B cell (primary cell): ENCODE measurements at regions of chr2 and their contacts with region 1.

Region 1: DNA sequence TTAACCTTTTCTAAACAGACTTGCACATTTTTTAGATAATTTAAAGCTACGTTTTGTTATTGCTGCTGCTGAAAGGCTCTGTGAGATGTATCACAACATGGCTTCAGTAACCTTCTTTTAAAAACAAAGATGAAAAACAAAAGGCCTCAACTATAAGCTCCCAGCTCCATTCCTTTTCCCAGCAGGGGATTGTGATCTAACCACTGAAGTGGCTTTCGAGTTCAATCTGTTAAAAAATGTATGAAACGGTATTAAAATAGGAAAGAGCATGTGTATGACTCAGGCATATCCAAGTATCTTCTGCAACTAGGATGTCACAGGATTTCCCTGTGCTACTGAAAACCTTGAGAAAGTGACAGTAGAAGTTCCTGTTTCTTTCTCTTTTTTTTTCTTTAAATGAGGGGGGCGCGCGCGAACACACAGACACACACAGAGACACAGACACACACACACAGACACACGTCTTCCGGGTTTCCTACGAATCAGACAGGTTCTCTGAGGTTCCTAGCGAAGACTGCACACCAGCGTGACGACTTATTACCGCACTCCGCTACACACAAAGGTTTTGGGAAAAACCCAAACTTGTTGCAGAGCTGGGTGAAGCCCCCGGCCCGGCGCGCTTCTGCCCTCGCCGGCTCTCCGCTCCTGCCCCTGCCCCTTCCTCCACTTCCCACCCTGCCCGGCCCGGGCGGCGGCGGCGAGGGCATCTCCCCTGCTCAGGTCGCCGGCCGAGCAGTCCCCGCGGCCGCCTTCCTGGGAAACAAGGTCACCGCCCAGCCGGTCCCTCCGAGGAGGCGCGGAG is 86.8 kb downstream of the RBMS1 start:
- DNase-seq: peak; percentile 91
- ATAC-seq: peak; percentile 71
- H3K4me3 ChIP-seq: peak overlapping the region; percentile 53 to 95 (median 84)
- H3K4me3 Mint-ChIP-seq: peak overlapping the region; percentile 90
- H3K27ac ChIP-seq: peak overlapping the region; percentile 63 to 96
- H3K27ac Mint-ChIP-seq: peak overlapping the region; percentile 96
- H3K4me1 ChIP-seq: peaks cover 55 to 56% of the 10 kb centered on the region in 2 donors
- H3K4me1 Mint-ChIP-seq: peaks cover 79% of the 10 kb centered on the region
- H3K27me3 ChIP-seq: no peaks in the 10 kb centered on the region
- H3K27me3 Mint-ChIP-seq: no peaks in the 10 kb centered on the region
- CTCF ChIP-seq: no peak

Region 2: GRCh38 chr2:159286709-159287441 is 1119.9 kb before region 1 on chr2:
- CTCF ChIA-PET with region 1: no interaction called
- POLR2A ChIA-PET with region 1: no interaction called
- intact Hi-C with region 1: loop called (anchors 10 kb)
- DNase-seq: peak; percentile 98
- ATAC-seq: peak; percentile 99
- H3K4me3 ChIP-seq: peak overlapping the region; percentile 65 to 93 (median 85)
- H3K4me3 Mint-ChIP-seq: peak overlapping the region; percentile 95
- H3K27ac ChIP-seq: peak overlapping the region; percentile 78 to 87
- H3K27ac Mint-ChIP-seq: peak overlapping the region; percentile 90
- H3K4me1 ChIP-seq: peaks cover 20 to 26% of the 10 kb centered on the region in 2 donors
- H3K4me1 Mint-ChIP-seq: peaks cover 32% of the 10 kb centered on the region
- H3K27me3 ChIP-seq: no peaks in the 10 kb centered on the region
- H3K27me3 Mint-ChIP-seq: peaks cover 4% of the 10 kb centered on the region
- CTCF ChIP-seq: no peak

Region 3: DNA sequence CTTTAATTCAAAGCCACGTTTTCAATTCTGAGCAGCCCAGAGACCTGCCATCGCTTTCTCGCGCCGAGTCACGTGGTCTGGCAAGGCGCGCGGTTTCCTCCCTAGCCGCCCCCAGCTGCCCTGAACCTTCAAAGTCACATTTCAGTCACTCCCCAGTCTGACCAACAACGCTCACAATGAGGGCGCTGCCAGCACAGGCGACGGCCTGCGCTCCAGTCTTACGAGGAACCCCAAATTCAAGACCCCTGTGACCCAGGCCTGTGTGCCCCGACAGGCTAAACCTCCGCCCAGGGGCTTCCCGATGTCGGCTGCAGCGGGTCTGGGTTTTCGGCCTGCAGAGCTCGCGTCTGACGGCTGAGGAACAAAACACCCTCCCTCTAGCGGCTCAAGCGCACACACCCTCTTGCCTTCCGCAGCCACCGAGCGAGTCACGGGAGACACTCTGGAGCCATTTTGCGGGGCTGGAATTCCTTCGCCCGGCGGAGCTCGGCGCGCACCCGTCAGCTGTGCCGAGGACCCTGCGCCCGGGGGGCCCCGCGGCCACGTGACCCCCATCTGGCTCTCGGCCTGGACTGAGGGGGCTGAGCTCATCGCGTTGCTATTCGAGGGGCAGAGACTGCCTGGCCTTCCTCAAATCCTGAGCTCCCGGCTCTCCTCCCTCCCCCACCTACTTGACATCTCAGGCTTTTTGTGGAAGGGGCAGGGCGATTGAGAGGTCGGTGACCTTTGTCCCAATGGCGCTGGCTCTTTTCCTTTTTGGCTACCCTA is 136.8 kb before region 1 on chr2:
- CTCF ChIA-PET with region 1: no interaction called
- POLR2A ChIA-PET with region 1: no interaction called
- intact Hi-C with region 1: loop called (anchors 5 kb)
- DNase-seq: peak; percentile 85
- ATAC-seq: peak; percentile 95
- H3K4me3 ChIP-seq: peak overlapping the region in 4 of 5 experiments; percentile 44 to 75 (median 58)
- H3K4me3 Mint-ChIP-seq: peak overlapping the region; percentile 93
- H3K27ac ChIP-seq: peak overlapping the region in 1 of 2 donors; percentile 64
- H3K27ac Mint-ChIP-seq: peak overlapping the region; percentile 78
- H3K4me1 ChIP-seq: peaks cover 6 to 15% of the 10 kb centered on the region in 2 donors
- H3K4me1 Mint-ChIP-seq: peaks cover 13% of the 10 kb centered on the region
- H3K27me3 ChIP-seq: no peaks in the 10 kb centered on the region
- H3K27me3 Mint-ChIP-seq: peaks cover 6% of the 10 kb centered on the region
- CTCF ChIP-seq: peak; percentile 71

Region 4: GRCh38 chr2:160394153-160394552 is 12.6 kb before region 1 on chr2:
- CTCF ChIA-PET with region 1: interaction called, 5 read pairs
- POLR2A ChIA-PET with region 1: interaction called, 4 read pairs
- intact Hi-C with region 1: loop called (anchors 1 kb)
- DNase-seq: peak; percentile 70
- ATAC-seq: peak; percentile 98
- H3K4me3 ChIP-seq: peak overlapping the region in 1 of 5 experiments; percentile 44
- H3K4me3 Mint-ChIP-seq: peak overlapping the region; percentile 44
- H3K27ac ChIP-seq: peak overlapping the region in 1 of 2 donors; percentile 14
- H3K27ac Mint-ChIP-seq: no peak overlapping the region
- H3K4me1 ChIP-seq: peaks cover 62 to 69% of the 10 kb centered on the region in 2 donors
- H3K4me1 Mint-ChIP-seq: peaks cover 57% of the 10 kb centered on the region
- H3K27me3 ChIP-seq: no peaks in the 10 kb centered on the region
- H3K27me3 Mint-ChIP-seq: no peaks in the 10 kb centered on the region
- CTCF ChIP-seq: no peak

Region 5: GRCh38 chr2:160493227-160494028 is 86.6 kb after region 1 on chr2 and contains the start of gene RBMS1:
- CTCF ChIA-PET with region 1: no interaction called
- POLR2A ChIA-PET with region 1: interaction called, 3 read pairs
- intact Hi-C with region 1: loop called (anchors 10 kb)
- DNase-seq: peak; percentile 52
- ATAC-seq: peak; percentile 46
- H3K4me3 ChIP-seq: peak within 1 kb of the TSS; percentile 29 to 74 (median 56)
- H3K4me3 Mint-ChIP-seq: peak within 1 kb of the TSS; percentile 90
- H3K27ac ChIP-seq: no peak within 1 kb of the TSS
- H3K27ac Mint-ChIP-seq: no peak within 1 kb of the TSS
- H3K4me1 ChIP-seq: peaks cover 11 to 16% of the 10 kb centered on the region in 2 donors
- H3K4me1 Mint-ChIP-seq: peaks cover 6% of the 10 kb centered on the region
- H3K27me3 ChIP-seq: peaks cover 0 to 38% (median 24%) of the 10 kb centered on the region in 4 experiments
- H3K27me3 Mint-ChIP-seq: peaks cover 44% of the 10 kb centered on the region
- CTCF ChIP-seq: no peak
- total RNA-seq, gene RBMS1: 36.7 and 42.2 TPM in 2 replicates

Region 6: GRCh38 chr2:161160226-161161069 is 753.7 kb after region 1 on chr2 and contains the start of gene TANK:
- CTCF ChIA-PET with region 1: no interaction called
- POLR2A ChIA-PET with region 1: no interaction called
- intact Hi-C with region 1: loop called (anchors 1 kb)
- DNase-seq: peak; percentile 96
- ATAC-seq: peak; percentile 95
- H3K4me3 ChIP-seq: peak within 1 kb of the TSS; percentile 90 to 99 (median 96)
- H3K4me3 Mint-ChIP-seq: peak within 1 kb of the TSS; percentile 95
- H3K27ac ChIP-seq: peak within 1 kb of the TSS; percentile 93 to 97
- H3K27ac Mint-ChIP-seq: peak within 1 kb of the TSS; percentile 96
- H3K4me1 ChIP-seq: peaks cover 37 to 45% of the 10 kb centered on the region in 2 donors
- H3K4me1 Mint-ChIP-seq: peaks cover 77% of the 10 kb centered on the region
- H3K27me3 ChIP-seq: no peaks in the 10 kb centered on the region
- H3K27me3 Mint-ChIP-seq: no peaks in the 10 kb centered on the region
- CTCF ChIP-seq: no peak
- total RNA-seq, gene TANK: 179 and 191 TPM in 2 replicates

Region 7: DNA sequence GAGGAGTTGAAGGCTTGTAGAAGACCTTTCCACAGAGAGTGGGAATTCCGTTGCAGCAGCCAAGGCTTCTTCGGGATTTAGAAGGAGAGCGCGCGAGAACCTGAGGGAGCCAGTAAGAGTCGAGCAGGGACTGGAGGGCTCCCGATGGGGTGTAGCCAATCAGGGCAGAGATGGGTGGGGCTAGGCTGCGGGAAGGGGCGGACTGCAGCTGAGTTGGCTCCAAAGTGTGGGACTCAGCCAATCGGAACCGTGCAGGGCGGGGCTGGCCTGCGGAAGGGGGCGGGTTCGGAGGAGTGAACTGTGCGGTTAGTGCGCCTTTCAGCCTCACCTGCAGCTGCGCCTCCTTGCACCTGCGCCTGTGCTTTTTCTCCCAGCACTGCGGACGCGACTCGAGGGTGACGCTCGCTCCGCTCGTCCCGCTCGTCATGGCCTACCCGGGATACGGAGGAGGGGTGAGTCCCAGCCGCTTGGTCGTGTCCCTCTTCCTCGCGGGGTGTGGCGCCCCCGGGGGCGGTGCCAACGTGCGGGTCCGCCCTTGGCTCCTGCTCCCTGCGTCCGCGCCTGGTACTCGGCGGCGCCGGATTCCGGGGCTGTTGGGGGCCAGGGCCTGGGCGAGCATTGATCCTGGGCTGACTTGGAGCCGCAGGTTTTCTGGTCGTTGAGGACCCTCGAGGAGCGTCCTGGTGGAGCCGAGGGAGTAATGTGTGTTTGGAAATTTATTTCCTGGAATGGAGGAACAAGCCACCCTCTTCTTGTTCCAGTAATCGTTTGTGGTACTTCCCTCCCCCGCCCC is 1937.2 kb after region 1 on chr2 and contains the start of gene GCA:
- CTCF ChIA-PET with region 1: no interaction called
- POLR2A ChIA-PET with region 1: no interaction called
- intact Hi-C with region 1: loop called (anchors 10 kb)
- DNase-seq: peak; percentile 98
- ATAC-seq: peak; percentile 98
- H3K4me3 ChIP-seq: peak within 1 kb of the TSS; percentile 62 to 93 (median 89)
- H3K4me3 Mint-ChIP-seq: peak within 1 kb of the TSS; percentile 91
- H3K27ac ChIP-seq: peak within 1 kb of the TSS; percentile 80 to 86
- H3K27ac Mint-ChIP-seq: peak within 1 kb of the TSS; percentile 90
- H3K4me1 ChIP-seq: peaks cover 11 to 16% of the 10 kb centered on the region in 2 donors
- H3K4me1 Mint-ChIP-seq: peaks cover 19% of the 10 kb centered on the region
- H3K27me3 ChIP-seq: no peaks in the 10 kb centered on the region
- H3K27me3 Mint-ChIP-seq: no peaks in the 10 kb centered on the region
- CTCF ChIP-seq: no peak
- total RNA-seq, gene GCA: 31.6 and 33.0 TPM in 2 replicates